Panc1 (cell line): ENCODE measurements at regions of chr17 and their contacts with region 1.

Region 1: GRCh38 chr17:21457051-21458026 is 81.2 kb downstream of the KCNJ12 start:
- DNase-seq: peak; percentile 71
- ATAC-seq: peak; percentile 89
- H3K4me3 ChIP-seq: no peak overlapping the region
- H3K27ac ChIP-seq: no peak overlapping the region
- H3K4me1 ChIP-seq: peaks cover 5% of the 10 kb centered on the region
- H3K27me3 ChIP-seq: no peaks in the 10 kb centered on the region; the same call in 1 of the 2 replicates
- CTCF ChIP-seq: peak; percentile 94

Region 2: DNA sequence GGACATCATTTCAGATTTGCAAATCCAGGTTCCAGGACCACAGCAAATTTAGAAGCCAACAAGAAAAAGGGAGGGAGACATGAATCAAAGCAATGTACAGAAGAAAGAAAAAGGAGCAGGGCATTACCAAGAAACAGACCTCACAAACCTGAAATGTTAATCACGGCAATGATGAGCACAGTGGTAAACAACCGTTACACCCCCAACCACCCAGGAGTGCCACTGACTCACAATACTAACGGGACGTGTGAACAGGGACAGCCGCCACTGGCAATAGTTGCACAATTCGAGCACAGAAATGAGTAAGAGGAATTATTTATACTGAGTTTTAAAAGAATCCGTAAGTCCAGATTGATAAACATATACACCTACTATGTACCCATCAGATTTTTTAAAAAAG is 428.3 kb before region 1 on chr17:
- CTCF ChIA-PET with region 1: interaction called, 14 read pairs
- POLR2A ChIA-PET with region 1: no interaction called
- in situ Hi-C with region 1: no loop called
- intact Hi-C with region 1: no loop called
- DNase-seq: no peak
- ATAC-seq: no peak
- H3K4me3 ChIP-seq: no peak overlapping the region
- H3K27ac ChIP-seq: no peak overlapping the region
- H3K4me1 ChIP-seq: peaks cover 16% of the 10 kb centered on the region
- H3K27me3 ChIP-seq: no peaks in the 10 kb centered on the region
- CTCF ChIP-seq: no peak

Region 3: DNA sequence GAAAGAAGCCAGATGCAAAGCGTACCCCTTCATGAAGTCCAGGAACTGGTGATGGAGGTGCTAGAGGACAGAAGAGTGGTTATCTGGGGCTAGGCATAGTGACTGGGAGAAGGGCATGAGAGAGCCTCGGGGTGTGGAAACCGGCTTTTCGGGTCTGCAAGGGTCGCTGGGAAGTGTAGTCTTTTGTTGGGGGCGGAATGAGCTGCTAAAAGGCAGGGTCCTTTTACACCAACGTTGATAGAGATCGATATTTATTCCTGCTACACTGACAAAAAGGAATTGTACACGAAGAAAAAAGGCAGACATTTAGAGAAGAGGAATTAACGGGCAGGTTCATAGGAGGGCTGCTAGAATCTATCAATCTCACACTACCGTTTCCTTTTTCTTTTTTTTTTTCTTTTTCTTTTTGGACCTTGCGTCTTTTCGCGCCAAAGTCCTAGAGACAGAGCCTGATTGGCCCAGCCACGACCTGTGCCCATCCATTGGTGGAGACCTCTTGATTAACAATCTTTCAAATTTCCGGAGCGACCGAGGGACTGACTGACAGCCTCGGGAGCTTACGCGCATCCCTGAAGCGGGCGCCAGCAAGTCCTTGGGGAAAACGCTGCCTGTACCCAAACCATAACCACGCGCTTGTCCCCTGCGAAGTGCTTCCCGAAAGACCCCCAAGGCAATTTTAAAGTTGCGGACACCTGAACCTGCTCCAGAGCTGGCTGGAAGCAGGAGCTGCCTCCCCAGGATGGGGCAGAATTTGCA is 358.2 kb before region 1 on chr17:
- CTCF ChIA-PET with region 1: interaction called, 10 read pairs
- POLR2A ChIA-PET with region 1: no interaction called
- in situ Hi-C with region 1: no loop called
- intact Hi-C with region 1: no loop called
- DNase-seq: peak; percentile 55
- ATAC-seq: peak; percentile 99
- H3K4me3 ChIP-seq: peak overlapping the region; percentile 82 to 94
- H3K27ac ChIP-seq: peak overlapping the region; percentile 83
- H3K4me1 ChIP-seq: no peaks in the 10 kb centered on the region
- H3K27me3 ChIP-seq: no peaks in the 10 kb centered on the region
- CTCF ChIP-seq: no peak

Region 4: DNA sequence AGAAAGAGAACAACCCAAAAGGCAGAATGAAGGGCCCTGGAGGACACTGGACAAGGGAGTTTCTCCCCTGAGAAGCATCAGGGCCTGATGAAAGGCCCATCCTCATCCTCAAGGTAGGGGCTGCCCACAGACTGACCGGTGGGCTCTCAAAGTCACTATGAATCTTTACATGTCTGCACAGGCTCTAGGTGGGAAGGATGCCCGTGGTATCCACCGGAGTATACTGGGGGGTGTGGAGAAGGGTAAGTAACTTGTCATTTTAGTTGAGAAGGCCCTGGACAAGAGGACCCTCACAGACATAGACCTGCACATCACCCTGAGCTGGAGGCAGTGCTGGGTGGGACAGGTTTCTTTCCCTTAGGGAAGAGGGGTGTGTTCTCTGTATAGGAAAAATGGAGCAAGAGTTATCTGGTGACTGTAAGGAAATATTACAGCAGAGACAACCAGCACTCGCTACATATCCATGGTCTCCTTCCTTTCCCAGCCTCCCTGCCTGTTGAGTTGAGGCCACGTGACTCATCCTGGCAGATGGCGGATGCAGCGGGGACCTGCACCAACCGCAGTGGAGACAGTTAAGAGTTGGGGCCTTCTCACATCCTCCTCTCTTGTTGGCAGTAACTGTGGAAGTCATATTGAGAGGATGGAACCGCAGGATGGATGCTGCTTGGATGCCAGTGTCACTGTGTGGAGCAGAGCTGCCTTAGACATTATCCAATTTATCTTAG is 126.7 kb before region 1 on chr17:
- CTCF ChIA-PET with region 1: no interaction called
- POLR2A ChIA-PET with region 1: no interaction called
- in situ Hi-C with region 1: no loop called
- intact Hi-C with region 1: no loop called
- DNase-seq: no peak
- ATAC-seq: no peak
- H3K4me3 ChIP-seq: no peak overlapping the region
- H3K27ac ChIP-seq: no peak overlapping the region
- H3K4me1 ChIP-seq: no peaks in the 10 kb centered on the region
- H3K27me3 ChIP-seq: no peaks in the 10 kb centered on the region
- CTCF ChIP-seq: no peak

Region 5: DNA sequence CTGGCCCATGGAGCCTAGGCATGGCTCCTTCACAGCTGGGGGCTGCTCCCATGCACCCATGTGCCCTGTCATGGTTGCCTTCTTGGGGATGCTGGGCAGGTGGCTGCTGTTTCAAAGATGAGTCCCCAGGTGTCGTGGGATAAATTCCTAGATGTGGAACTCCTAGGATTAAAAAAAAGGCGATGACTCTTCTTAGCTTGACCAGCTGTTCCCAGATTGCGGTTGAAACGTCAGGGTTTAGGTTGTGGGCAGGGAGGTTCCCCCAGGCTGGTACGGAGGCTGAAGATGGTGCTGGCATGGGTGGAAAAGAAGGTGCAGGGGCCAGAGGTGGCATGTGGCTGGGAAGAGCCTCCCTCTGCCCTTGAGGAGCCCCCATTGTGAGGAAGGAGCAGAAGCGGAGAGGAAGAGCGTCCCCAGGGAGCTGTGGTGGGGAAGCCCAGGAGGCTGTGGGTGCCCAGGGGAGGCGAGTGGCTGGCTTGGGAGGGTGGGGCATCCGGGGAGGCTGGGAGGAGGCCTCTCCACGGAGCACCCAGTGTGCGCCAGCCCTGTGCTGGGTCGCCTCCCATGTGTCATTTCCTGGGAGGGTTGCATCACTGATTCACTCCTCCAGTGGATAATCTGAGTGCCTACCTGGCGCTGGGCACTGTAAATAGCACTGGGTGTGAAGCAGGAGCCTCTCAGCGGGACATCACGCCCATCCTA is 88.6 kb before region 1 on chr17:
- CTCF ChIA-PET with region 1: interaction called, 12 read pairs
- POLR2A ChIA-PET with region 1: no interaction called
- in situ Hi-C with region 1: no loop called
- intact Hi-C with region 1: no loop called
- DNase-seq: no peak
- ATAC-seq: no peak
- H3K4me3 ChIP-seq: no peak overlapping the region
- H3K27ac ChIP-seq: no peak overlapping the region
- H3K4me1 ChIP-seq: no peaks in the 10 kb centered on the region
- H3K27me3 ChIP-seq: no peaks in the 10 kb centered on the region
- CTCF ChIP-seq: no peak

Region 6: DNA sequence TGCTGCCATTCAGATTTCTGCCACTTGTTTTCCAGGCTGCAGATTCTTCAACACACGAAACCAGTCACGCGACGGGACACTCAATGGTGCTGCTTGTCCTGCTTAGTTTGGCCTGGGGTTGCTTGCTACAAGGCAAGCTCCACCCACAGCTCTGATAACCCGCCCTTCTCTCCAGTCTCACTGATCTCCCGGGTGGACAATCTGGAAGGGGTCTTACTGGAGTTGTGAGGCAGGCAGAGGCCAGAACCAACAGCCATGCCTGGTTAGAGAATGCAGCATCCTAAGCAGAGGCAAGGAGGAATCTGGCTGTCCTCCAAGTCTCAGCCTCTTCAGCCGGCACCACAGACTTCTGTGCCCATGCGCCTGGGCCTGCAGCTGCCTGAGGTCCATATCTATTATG is 37.9 kb after region 1 on chr17:
- CTCF ChIA-PET with region 1: no interaction called
- POLR2A ChIA-PET with region 1: no interaction called
- in situ Hi-C with region 1: no loop called
- intact Hi-C with region 1: no loop called
- DNase-seq: no peak
- ATAC-seq: no peak
- H3K4me3 ChIP-seq: no peak overlapping the region
- H3K27ac ChIP-seq: no peak overlapping the region
- H3K4me1 ChIP-seq: no peaks in the 10 kb centered on the region
- H3K27me3 ChIP-seq: no peaks in the 10 kb centered on the region
- CTCF ChIP-seq: no peak

Region 7: DNA sequence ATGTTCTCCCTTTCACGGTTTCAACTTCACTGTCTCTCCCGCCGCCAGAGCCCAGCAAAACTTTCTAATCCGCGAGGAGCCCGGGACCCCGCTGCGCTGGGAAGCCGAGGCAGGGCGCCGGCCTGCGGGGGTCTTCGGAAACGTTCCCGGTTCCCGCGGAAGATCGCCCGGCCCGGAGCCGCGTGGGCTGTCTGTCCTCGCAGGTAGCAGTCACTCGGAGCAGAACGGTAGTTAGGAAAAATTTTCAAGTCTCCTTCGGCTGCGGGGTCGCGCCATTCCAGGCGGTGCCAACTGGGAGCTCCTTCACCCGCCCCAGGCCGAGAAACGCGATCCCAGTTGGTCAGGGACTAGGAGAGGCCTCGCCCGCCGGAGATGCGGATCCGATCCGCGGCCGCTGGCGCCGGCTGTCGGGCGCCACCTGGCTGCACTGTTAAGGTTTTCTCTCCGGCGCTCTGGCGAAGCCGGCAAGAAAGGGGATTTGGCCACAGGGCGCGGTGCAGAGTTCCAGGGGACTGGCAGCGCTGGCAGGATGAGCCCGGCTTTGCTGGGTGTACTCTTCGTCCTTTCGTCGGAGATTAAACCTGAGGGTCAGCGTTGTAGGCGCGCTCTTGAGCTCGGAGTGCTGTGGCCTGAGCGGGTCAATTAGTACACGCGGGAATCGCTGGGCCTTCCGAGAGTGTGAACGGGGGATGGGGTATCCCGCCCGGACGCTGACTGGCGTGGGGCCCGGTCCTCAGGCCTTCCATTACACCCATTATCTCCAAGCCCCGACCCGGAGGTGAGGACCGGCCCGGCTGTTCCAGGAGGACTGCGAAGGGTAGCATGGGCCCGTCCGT is 54.2 kb after region 1 on chr17:
- CTCF ChIA-PET with region 1: interaction called, 41 read pairs
- POLR2A ChIA-PET with region 1: no interaction called
- in situ Hi-C with region 1: no loop called
- intact Hi-C with region 1: loop called (anchors 1 kb)
- DNase-seq: peak; percentile 38
- ATAC-seq: peak; percentile 97
- H3K4me3 ChIP-seq: peak overlapping the region; percentile 47 to 50
- H3K27ac ChIP-seq: peak overlapping the region; percentile 39; the same call in 1 of the 2 replicates
- H3K4me1 ChIP-seq: no peaks in the 10 kb centered on the region
- H3K27me3 ChIP-seq: no peaks in the 10 kb centered on the region
- CTCF ChIP-seq: peak; percentile 92